ENCODE measurements at regions of chr17 and their contacts with region 1.

Region 1: DNA sequence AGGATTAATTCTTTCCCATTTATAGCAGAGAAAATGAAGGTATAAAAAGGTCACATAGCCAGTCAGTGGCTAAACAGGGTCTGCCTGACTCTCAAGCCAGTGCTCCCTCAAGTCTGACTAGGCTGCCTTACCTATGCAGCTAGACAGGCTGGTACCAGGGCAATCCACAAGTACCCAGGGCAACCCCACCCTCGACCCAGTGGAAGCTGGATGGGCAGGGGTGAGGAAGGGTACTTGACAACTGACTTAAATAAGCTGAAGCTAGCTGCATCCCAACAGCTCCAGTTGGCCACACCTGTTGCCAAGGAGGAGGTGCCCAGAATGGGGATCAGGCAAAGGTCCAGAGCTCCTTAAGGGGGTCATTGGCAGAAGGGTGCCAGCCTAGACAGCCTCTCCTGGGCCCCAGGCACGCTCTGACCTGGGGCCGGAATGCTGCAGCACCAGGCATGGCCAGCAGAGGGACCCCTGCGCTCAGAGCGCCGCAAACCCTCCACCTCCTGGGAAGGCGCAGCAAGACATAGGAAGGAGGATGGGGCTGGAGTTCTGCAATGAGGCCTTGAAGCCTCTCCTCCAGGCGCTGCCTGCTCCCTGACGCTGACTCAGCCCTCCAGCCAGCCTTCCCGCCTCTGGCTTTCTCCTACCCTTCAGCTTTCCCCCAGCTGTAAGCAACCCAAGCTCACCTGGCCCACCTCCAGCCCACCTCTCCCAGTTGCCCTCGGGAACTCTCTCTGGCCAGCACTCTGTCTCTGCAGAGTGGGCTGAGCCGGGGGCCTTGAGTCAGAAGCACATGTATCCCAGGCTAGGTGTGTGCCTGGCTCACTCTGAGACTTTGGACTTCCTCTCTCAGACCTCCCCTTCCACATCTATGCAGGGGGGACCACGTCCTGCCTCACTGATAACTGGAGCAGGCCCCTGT is 28.8 kb downstream of the MPP2 start:
- DNase-seq: peak; percentile 64
- ATAC-seq: peak; percentile 85
- H3K4me3 Mint-ChIP-seq: no peak overlapping the region
- H3K27ac Mint-ChIP-seq: no peak overlapping the region
- H3K4me1 Mint-ChIP-seq: no peaks in the 10 kb centered on the region
- H3K27me3 Mint-ChIP-seq: peaks cover 4% of the 10 kb centered on the region

Region 2: GRCh38 chr17:43868226-43868994 is 10.1 kb before region 1 on chr17:
- CTCF ChIA-PET with region 1: interaction called, 15 read pairs
- DNase-seq: no peak
- ATAC-seq: no peak
- H3K4me3 Mint-ChIP-seq: no peak overlapping the region
- H3K27ac Mint-ChIP-seq: no peak overlapping the region
- H3K4me1 Mint-ChIP-seq: no peaks in the 10 kb centered on the region
- H3K27me3 Mint-ChIP-seq: peaks cover 44% of the 10 kb centered on the region

Region 3: DNA sequence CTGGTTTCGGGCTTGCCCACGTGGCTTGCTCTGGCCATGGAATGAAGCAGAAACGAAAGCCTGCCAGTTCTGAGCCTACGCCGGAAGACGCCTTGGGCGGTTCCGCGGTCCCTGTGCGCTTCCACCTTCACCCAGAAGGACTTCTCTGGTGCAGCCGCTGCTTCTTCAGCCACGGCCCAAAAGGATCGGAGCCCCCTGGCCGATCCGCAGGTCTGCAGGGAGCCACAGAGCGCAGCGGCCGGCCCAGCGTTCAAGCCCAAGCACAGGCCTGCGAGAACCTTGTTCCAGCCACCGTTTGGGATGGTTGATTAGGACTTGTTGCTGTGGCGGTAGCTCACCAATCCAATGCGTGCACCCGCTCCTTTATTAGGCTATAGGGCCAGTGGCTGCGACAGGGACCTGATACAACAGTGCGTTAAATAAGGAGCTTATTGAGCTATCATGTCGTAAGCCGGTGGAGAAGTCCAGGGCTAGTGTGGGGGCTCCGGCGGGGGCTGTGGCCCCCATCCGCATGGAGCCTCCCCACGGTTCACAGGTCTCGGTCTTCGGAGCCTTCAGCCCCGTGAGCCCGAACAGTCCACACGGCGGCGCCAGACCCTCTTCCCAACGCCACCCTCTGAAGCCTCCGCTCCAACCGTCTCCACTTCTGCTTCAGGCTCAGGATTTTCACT is 39.0 kb after region 1 on chr17:
- CTCF ChIA-PET with region 1: no interaction called
- DNase-seq: peak; percentile 60
- ATAC-seq: peak; percentile 83
- H3K4me3 Mint-ChIP-seq: peak overlapping the region; percentile 64
- H3K27ac Mint-ChIP-seq: peak overlapping the region; percentile 61
- H3K4me1 Mint-ChIP-seq: peaks cover 18% of the 10 kb centered on the region
- H3K27me3 Mint-ChIP-seq: peaks cover 11% of the 10 kb centered on the region

Region 4: GRCh38 chr17:44006598-44007345 is 128.3 kb after region 1 on chr17:
- CTCF ChIA-PET with region 1: interaction called, 11 read pairs
- DNase-seq: peak; percentile 99
- ATAC-seq: peak; percentile 89
- H3K4me3 Mint-ChIP-seq: peak overlapping the region; percentile 79
- H3K27ac Mint-ChIP-seq: peak overlapping the region; percentile 7
- H3K4me1 Mint-ChIP-seq: peaks cover 26% of the 10 kb centered on the region
- H3K27me3 Mint-ChIP-seq: peaks cover 22% of the 10 kb centered on the region

Measured in activated CD8-positive, alpha-beta memory T cell treated with anti-CD3 and anti-CD28 coated beads, Interleukin-2, amount 10 ng/mL, durations not matched to agents 7 days and 5 days (primary cell).